ENCODE measurements at regions of chr2 and their contacts with region 1.

Region 1: DNA sequence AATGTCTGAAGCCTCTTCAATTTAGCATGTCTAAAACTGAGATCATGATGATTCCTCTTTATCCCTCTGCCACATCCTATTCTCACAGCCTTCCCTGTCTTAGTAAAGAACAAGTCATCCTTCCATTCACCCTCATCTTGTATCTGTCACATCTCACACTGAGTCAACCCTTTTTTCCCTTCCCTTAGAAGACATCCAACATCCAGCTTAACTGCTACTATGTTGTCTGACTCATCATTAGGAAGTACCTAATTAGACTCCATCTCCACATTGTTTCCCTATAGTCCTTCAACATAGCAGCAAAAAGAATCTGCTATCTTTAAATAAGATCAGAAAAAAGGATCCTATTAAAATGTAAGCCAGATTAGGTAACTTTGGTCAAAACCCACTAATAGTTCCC is 85.2 kb upstream of the GRB14 start:
- DNase-seq: no peak
- H3K4me3 ChIP-seq: no peak overlapping the region
- H3K27ac ChIP-seq: no peak overlapping the region
- H3K4me1 ChIP-seq: no peaks in the 10 kb centered on the region
- H3K27me3 ChIP-seq: no peaks in the 10 kb centered on the region
- CTCF ChIP-seq: no peak
- EP300 ChIP-seq: no peak
- POLR2A ChIP-seq: no peak
- RAD21 ChIP-seq: no peak

Region 2: DNA sequence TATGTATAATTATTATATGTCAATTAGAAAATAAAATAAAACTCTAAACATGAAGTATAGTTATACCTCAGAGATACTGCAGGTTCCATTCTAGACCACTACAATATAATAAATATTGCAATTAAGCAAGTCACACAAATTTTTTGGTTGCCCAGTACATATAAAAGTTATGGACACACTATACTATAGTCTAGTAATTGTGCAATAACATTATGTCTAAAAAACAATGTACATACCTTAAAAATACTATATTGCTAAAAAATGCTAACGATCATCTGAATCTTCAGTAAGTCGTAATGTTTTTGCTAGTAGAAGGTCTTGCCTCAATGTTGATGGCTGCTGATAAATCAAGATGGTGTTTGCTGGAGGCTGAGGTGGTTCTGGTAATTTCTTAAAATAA is 40.4 kb before region 1 on chr2:
- CTCF ChIA-PET with region 1: no interaction called
- POLR2A ChIA-PET with region 1: no interaction called
- DNase-seq: no peak
- H3K4me3 ChIP-seq: no peak overlapping the region
- H3K27ac ChIP-seq: no peak overlapping the region
- H3K4me1 ChIP-seq: no peaks in the 10 kb centered on the region
- H3K27me3 ChIP-seq: no peaks in the 10 kb centered on the region
- CTCF ChIP-seq: no peak
- EP300 ChIP-seq: no peak
- POLR2A ChIP-seq: no peak
- RAD21 ChIP-seq: no peak

Region 3: DNA sequence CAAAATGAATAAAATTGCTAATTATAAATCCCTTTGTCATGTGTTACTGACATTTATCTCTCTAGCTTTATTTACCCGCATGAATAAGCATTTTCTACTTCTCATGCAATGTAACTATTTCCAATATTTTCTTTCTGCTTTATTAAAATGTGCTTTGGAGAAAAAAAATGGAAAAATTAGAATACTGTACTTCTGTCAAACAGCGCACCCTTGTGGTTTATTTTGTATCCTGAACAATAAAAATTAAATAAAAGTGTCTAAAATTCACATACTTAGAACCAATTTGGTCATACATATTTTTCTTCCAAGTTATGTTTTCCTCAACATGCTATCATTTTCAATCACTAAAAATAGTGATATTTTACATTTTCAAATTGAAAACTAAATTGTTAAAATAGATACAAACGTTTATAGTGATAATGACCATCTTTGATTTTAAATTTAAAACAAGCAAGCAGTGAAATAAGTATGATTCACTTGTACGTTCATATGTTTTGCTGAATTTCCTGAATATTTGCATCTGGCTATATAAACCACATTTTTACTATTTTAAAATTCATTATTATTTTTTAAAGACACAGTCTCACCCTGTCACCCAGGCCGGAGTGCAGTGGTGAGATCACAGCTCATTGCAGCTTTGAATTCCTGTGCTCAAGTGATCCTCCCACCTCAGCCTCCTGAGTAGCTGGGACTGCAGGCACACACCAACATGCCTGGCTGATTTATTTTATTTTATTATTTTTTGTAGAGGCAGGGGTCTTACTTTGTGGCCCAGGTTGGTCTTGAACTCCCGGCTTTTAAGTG is 10.7 kb after region 1 on chr2:
- CTCF ChIA-PET with region 1: interaction called, 15 read pairs
- POLR2A ChIA-PET with region 1: no interaction called
- DNase-seq: no peak
- H3K4me3 ChIP-seq: no peak overlapping the region
- H3K27ac ChIP-seq: no peak overlapping the region
- H3K4me1 ChIP-seq: peaks cover 0 to 3% (median 0%) of the 10 kb centered on the region in 4 experiments; a peak in 1 of 7 replicates
- H3K27me3 ChIP-seq: no peaks in the 10 kb centered on the region
- CTCF ChIP-seq: peak in 2 of 3 experiments; percentile 25 to 44; a peak in 2 of 4 replicates
- EP300 ChIP-seq: no peak
- POLR2A ChIP-seq: no peak
- RAD21 ChIP-seq: peak in 1 of 2 experiments; percentile 42; a peak in 3 of 4 replicates

Measured in H1 (cell line).